ENCODE measurements at regions of chr22 and their contacts with region 1.

Region 1: DNA sequence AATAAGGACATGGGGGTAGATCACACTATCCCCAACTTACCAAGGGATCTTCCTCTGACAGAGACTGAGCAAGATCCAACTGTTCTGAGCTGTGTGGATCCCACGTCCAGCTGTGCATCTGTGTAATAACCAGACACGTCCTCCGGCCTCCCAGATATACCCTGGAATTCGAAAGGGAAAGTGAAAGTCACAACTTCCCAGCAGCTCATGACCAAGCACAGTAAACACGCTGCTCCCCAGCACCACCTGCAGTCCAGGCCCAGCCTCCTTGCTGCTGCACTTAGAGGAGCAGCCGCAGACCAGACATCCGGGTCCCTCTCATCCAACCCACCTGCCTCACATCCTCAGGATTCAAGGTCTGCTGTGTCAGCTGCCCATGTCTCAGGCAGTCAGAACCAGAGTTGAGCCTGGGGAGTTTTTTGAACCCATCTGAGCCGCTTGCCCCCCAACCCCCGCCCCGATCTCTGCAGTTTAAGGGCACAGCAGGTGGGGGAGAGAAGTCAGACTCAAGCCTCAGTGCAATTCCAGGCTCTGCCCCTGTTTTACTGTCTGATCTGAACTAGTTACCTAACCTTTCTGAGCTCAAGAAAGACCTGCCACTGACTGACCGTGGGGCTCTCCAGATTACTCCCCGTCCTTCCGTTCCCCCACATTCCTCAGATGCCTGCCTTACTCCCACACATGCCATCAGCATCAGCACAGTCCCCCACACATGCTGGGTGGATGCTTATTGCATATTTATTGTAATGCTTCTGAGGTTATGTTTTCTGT is at the start of gene APOL2:
- DNase-seq: peak; percentile 86 to 93
- ATAC-seq: peak; percentile 94 to 98 (median 97)
- H3K4me3 ChIP-seq: peak within 1 kb of the TSS; percentile 59 to 83 (median 66)
- H3K27ac ChIP-seq: peak within 1 kb of the TSS; percentile 83 to 97 (median 92)
- H3K4me1 ChIP-seq: peaks cover 28 to 62% (median 55%) of the 10 kb centered on the region in 9 donors
- H3K27me3 ChIP-seq: no peaks in the 10 kb centered on the region
- CTCF ChIP-seq: peak; percentile 37 to 91 (median 71)
- total RNA-seq, gene APOL2: 30.9 to 215 (median 53.3) TPM

Region 2: DNA sequence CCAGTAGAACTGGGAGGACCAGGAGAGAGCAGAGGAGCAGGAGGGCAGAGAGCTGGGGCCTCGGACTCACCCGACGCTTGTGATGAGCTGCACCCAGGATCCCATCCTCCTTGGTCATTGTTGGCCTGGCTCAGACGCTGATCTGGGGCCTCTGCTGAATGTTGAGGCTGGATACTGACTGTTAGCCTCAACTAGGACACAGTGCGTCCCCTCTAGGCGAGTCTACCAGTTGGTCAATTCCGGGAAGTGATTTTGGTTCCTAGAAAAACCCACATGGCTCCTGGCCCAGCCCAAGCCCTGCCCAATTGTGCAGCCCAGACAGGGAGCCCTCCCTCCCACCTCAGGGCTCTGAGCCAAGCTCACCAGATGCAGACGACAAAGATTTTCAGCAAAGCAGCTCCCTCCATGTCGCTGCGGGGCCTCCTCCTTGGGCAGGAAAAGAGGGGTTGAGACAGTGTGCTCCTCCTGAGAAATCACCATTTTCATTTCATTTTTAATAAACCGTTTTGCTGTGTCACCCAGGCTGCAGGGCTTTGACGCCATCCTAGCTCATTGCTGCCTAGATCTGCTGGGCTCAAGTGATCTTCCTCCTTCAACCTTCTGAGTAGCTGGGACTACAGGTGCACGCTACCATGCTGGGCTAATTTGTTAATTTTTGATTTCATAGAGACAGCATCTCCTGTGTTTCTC is 37.8 kb before region 1 on chr22 and contains the start of gene APOL4:
- intact Hi-C with region 1: loop called in 6 of 10 experiments (anchors 5 kb)
- DNase-seq: peak; percentile 81 to 92
- ATAC-seq: peak; percentile 75 to 95 (median 88)
- H3K4me3 ChIP-seq: peak within 1 kb of the TSS in 8 of 10 donors; percentile 15 to 60 (median 41)
- H3K27ac ChIP-seq: peak within 1 kb of the TSS; percentile 49 to 92 (median 70)
- H3K4me1 ChIP-seq: peaks cover 7 to 59% (median 43%) of the 10 kb centered on the region in 9 donors
- H3K27me3 ChIP-seq: no peaks in the 10 kb centered on the region
- CTCF ChIP-seq: peak in 2 of 9 donors; percentile 10 to 34
- total RNA-seq, gene APOL4: 1.6 to 22.6 (median 4.9) TPM in 9 of 10 donors, not detected in the other

Region 3: DNA sequence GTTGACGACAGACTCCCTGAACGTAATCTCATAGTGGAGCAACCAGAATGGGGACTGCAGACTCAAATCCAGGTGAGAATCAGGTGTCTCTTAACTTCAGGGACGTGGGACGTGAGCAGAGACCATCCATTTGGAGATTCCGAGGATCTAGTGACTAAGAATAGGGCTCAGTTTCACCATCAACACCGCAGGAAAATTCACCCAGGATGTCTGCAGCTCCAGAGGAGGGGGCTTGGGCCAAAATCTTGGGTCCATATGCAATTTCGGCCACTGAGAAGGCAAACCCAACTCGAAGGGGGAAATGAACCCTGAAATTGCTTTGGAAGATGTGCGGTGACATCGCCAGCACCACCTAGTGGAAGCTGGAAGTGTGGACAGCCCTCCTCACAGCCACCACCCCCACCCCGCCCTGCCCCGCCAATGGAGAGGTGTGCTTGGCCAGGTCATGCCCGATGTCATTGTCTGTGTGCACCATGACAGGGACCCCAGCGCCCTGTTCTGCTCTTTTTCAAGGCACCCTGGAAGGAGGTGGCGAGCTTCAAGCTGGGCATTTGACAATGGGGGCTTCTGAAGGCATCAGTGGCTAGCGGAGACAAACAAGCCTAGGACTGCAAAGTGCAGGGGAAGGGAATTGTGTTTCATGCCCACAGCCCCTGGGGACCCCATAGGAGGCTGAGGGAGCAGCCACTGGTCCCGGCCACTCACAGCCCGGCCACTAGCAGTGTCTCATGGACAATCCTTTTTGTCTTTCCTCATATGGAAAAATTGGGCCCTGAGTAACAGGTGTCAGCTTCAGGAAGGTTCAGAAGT is 38.1 kb after region 1 on chr22:
- intact Hi-C with region 1: loop called in 4 of 10 experiments (anchors 5 kb)
- DNase-seq: peak; percentile 57 to 65
- ATAC-seq: peak; percentile 53 to 73 (median 68)
- H3K4me3 ChIP-seq: peak overlapping the region in 1 of 10 donors; percentile 12
- H3K27ac ChIP-seq: peak overlapping the region in 3 of 10 donors; percentile 2 to 31 (median 21)
- H3K4me1 ChIP-seq: peaks cover 3 to 19% (median 11%) of the 10 kb centered on the region in 9 donors
- H3K27me3 ChIP-seq: no peaks in the 10 kb centered on the region
- CTCF ChIP-seq: peak; percentile 59 to 89 (median 82)

Measured in heart right ventricle (tissue), 16 donors.